B cell (primary cell): ENCODE measurements at regions of chr3 and their contacts with region 1.

Region 1: DNA sequence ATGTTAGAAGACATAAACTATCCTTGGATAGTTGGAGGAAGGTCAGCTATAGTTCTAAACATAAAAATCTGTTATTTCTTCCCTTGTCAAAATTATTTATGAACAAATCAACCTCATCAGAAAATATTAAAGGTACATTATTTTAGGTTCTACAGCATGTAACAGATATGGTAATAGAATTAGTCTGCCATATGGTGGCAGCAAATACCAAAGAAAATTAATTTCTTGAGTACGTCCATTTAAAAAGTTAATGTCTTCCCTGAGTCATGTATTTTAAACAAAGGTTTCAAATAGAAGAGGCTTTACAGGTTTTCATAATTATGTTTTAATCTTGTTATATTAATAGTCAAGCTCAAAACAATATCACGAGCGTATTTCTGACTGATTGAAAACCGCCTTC is 17.9 kb upstream of the ANKRD28 start:
- DNase-seq: peak; percentile 53
- ATAC-seq: no peak
- H3K4me3 ChIP-seq: no peak overlapping the region
- H3K4me3 Mint-ChIP-seq: no peak overlapping the region
- H3K27ac ChIP-seq: no peak overlapping the region
- H3K27ac Mint-ChIP-seq: no peak overlapping the region
- H3K4me1 ChIP-seq: peaks cover 6 to 8% of the 10 kb centered on the region in 2 donors
- H3K4me1 Mint-ChIP-seq: peaks cover 24% of the 10 kb centered on the region
- H3K27me3 ChIP-seq: no peaks in the 10 kb centered on the region
- H3K27me3 Mint-ChIP-seq: no peaks in the 10 kb centered on the region
- CTCF ChIP-seq: peak; percentile 63

Region 2: DNA sequence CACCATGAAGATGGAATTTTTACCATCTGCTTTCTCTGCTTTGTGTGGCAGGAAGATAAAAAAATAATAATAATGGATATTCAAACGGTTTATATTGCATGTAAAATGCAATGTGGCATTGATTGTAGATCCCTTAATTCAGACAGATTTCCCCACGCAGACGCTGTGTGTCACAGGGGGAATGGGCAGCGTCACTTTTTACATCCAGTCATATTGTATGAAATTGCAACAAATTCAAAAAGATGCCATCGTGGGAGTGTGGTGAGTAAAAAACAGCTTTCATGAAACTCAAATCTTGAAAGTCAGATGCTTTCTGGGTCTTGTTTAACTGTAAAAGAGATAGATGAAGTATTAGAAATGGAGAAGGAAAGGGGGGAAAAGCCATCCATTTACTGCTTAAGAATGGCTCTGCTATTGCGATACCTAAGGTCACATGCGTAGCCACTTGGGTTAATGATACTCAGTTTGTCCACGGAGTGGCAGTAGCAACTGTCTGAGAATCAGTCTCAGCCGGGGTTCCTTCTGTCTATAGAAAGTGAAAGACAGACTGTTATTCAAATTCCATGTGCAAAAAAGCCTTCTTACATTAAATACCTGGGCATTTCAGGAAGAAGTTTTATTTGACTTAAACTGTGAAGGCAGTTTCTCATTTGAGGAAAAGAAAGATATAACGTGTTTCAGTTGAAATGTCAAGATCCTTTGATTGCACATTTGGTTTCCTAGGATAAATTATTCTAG is 185.7 kb before region 1 on chr3:
- CTCF ChIA-PET with region 1: interaction called, 87 read pairs
- POLR2A ChIA-PET with region 1: no interaction called
- intact Hi-C with region 1: loop called (anchors 1 kb)
- DNase-seq: peak; percentile 84
- ATAC-seq: peak; percentile 97
- H3K4me3 ChIP-seq: peak overlapping the region in 1 of 5 experiments; percentile 4
- H3K4me3 Mint-ChIP-seq: peak overlapping the region; percentile 48
- H3K27ac ChIP-seq: no peak overlapping the region
- H3K27ac Mint-ChIP-seq: peak overlapping the region; percentile 22
- H3K4me1 ChIP-seq: peaks cover 9 to 10% of the 10 kb centered on the region in 2 donors
- H3K4me1 Mint-ChIP-seq: peaks cover 13% of the 10 kb centered on the region
- H3K27me3 ChIP-seq: no peaks in the 10 kb centered on the region
- H3K27me3 Mint-ChIP-seq: no peaks in the 10 kb centered on the region
- CTCF ChIP-seq: peak; percentile 78

Region 3: GRCh38 chr3:15778332-15778858 is 37.3 kb before region 1 on chr3:
- CTCF ChIA-PET with region 1: no interaction called
- POLR2A ChIA-PET with region 1: no interaction called
- intact Hi-C with region 1: loop called (anchors 5 kb)
- DNase-seq: no peak
- ATAC-seq: no peak
- H3K4me3 ChIP-seq: no peak overlapping the region
- H3K4me3 Mint-ChIP-seq: no peak overlapping the region
- H3K27ac ChIP-seq: no peak overlapping the region
- H3K27ac Mint-ChIP-seq: no peak overlapping the region
- H3K4me1 ChIP-seq: no peaks in the 10 kb centered on the region
- H3K4me1 Mint-ChIP-seq: peaks cover 13% of the 10 kb centered on the region
- H3K27me3 ChIP-seq: no peaks in the 10 kb centered on the region
- H3K27me3 Mint-ChIP-seq: no peaks in the 10 kb centered on the region
- CTCF ChIP-seq: no peak

Region 4: GRCh38 chr3:15797642-15798303 is 17.9 kb before region 1 on chr3 and contains the start of gene ANKRD28:
- CTCF ChIA-PET with region 1: interaction called, 20 read pairs
- POLR2A ChIA-PET with region 1: no interaction called
- intact Hi-C with region 1: no loop called
- DNase-seq: peak; percentile 57
- ATAC-seq: no peak
- H3K4me3 ChIP-seq: peak within 1 kb of the TSS in 3 of 5 experiments; percentile 18 to 52 (median 50)
- H3K4me3 Mint-ChIP-seq: peak within 1 kb of the TSS; percentile 70
- H3K27ac ChIP-seq: peak within 1 kb of the TSS; percentile 47 to 91
- H3K27ac Mint-ChIP-seq: peak within 1 kb of the TSS; percentile 64
- H3K4me1 ChIP-seq: peaks cover 33 to 39% of the 10 kb centered on the region in 2 donors
- H3K4me1 Mint-ChIP-seq: peaks cover 68% of the 10 kb centered on the region
- H3K27me3 ChIP-seq: no peaks in the 10 kb centered on the region
- H3K27me3 Mint-ChIP-seq: no peaks in the 10 kb centered on the region
- CTCF ChIP-seq: no peak
- total RNA-seq, gene ANKRD28: 37.4 and 45.7 TPM in 2 replicates

Region 5: DNA sequence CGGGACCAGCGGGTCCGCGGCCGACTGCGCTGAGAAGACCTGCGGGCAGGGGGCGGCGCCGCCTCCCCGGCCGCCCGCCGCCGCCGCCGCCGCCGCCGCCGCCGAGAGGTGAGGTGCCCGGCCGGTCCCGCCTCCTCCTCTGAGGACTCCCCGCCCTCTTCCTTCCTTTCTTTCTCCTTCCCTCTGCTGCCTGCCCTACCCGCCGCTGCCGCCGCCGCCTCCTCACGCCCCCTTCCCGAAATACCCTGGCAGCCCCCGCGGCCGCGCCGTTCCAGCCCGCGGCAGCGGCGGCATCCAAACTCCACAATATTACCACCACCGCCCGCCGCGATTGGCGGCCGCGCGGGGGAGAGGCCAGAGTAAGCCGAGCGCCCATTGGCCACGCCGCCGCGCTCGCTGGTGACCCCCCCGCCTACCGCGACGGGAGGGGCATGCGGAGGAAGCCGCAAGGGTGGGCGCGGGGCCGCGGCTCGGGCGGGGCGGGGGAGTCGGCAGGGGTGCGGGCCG is 43.9 kb after region 1 on chr3:
- CTCF ChIA-PET with region 1: no interaction called
- POLR2A ChIA-PET with region 1: no interaction called
- intact Hi-C with region 1: loop called (anchors 5 kb)
- DNase-seq: peak; percentile 86
- ATAC-seq: peak; percentile 76
- H3K4me3 ChIP-seq: peak overlapping the region in 4 of 5 experiments; percentile 66 to 87 (median 81)
- H3K4me3 Mint-ChIP-seq: peak overlapping the region; percentile 86
- H3K27ac ChIP-seq: peak overlapping the region; percentile 73 to 87
- H3K27ac Mint-ChIP-seq: peak overlapping the region; percentile 97
- H3K4me1 ChIP-seq: peaks cover 10 to 16% of the 10 kb centered on the region in 2 donors
- H3K4me1 Mint-ChIP-seq: peaks cover 24% of the 10 kb centered on the region
- H3K27me3 ChIP-seq: no peaks in the 10 kb centered on the region
- H3K27me3 Mint-ChIP-seq: no peaks in the 10 kb centered on the region
- CTCF ChIP-seq: no peak

Region 6: DNA sequence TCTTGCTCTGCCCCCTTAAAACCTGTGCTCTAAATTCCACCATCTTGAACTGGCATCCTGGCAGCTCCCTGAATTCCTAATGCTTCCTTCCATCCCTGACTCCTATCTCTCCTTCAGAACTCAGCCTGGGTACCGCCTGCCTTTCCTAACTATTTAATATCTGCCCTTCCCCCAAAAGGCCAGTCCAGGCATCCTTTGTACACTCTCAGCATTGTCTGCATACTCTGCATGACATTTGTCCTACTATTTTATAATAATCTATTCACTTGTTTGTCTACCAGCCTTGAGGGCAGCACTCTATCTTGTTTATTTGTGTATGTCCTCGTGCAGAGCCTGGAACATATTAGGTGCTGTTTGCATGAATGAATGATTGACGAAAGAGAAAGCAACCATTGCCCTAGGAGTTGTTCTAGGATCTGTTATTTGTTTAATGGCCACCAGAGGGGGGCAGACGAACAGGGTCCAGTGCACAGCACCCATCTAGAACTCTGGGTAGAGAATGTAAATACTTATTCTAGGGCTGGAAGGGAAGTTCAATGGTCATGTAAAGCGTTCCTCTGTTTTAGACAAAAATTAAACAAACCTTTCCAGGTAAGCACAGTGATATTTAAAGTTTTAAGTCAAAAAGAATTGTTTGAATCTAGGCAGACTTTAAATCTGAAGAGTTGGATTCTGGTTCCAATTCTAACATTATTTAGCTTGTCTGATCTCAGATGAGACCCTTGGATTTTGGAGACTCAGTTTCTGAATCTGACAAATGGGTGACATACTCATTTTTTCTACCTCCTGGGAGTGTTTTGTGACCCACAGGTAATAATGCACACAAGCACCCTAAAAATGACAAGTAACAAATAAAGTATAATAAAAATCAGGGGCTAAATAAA is 233.0 kb after region 1 on chr3:
- CTCF ChIA-PET with region 1: interaction called, 4 read pairs
- POLR2A ChIA-PET with region 1: no interaction called
- intact Hi-C with region 1: loop called (anchors 2 kb)
- DNase-seq: peak; percentile 56
- ATAC-seq: peak; percentile 81
- H3K4me3 ChIP-seq: no peak overlapping the region
- H3K4me3 Mint-ChIP-seq: peak overlapping the region; percentile 35
- H3K27ac ChIP-seq: no peak overlapping the region
- H3K27ac Mint-ChIP-seq: no peak overlapping the region
- H3K4me1 ChIP-seq: no peaks in the 10 kb centered on the region
- H3K4me1 Mint-ChIP-seq: no peaks in the 10 kb centered on the region
- H3K27me3 ChIP-seq: no peaks in the 10 kb centered on the region
- H3K27me3 Mint-ChIP-seq: peaks cover 6% of the 10 kb centered on the region
- CTCF ChIP-seq: peak; percentile 82

Region 7: GRCh38 chr3:16247276-16248061 is 431.8 kb after region 1 on chr3:
- CTCF ChIA-PET with region 1: interaction called, 11 read pairs
- POLR2A ChIA-PET with region 1: no interaction called
- intact Hi-C with region 1: no loop called
- DNase-seq: peak; percentile 86
- ATAC-seq: peak; percentile 93
- H3K4me3 ChIP-seq: no peak overlapping the region
- H3K4me3 Mint-ChIP-seq: peak overlapping the region; percentile 18
- H3K27ac ChIP-seq: no peak overlapping the region
- H3K27ac Mint-ChIP-seq: no peak overlapping the region
- H3K4me1 ChIP-seq: peaks cover 1 to 8% of the 10 kb centered on the region in 2 donors
- H3K4me1 Mint-ChIP-seq: peaks cover 12% of the 10 kb centered on the region
- H3K27me3 ChIP-seq: peaks cover 0 to 10% (median 0%) of the 10 kb centered on the region in 4 experiments
- H3K27me3 Mint-ChIP-seq: peaks cover 8% of the 10 kb centered on the region
- CTCF ChIP-seq: peak; percentile 87